Activated CD4-positive, alpha-beta T cell treated with anti-CD3 and anti-CD28 coated beads for 36 hours (primary cell): ENCODE measurements at regions of chr3 and their contacts with region 1.

Region 1: DNA sequence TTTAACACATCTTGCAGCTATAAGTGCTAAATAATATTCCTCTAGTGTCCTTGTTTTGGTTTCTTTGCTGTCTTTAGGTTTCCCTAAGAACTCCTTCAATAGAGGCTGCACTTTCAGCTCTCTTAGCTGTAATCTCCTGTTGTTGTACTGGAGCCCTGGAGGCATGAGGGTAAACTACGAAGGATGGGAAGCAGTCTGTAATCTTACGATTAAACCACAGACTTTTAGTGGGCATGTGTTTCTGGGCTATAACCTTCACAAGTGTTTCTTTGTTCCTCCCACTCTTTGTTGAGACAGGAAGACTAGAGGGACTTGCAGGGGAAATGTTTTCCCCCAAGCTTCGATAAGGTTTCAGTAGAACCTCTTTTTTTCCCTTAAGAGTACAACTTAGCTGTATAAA is 1058.1 kb downstream of the NSUN3 start:
- DNase-seq: no peak
- ATAC-seq: no peak
- H3K4me3 Mint-ChIP-seq: no peak overlapping the region
- H3K27ac Mint-ChIP-seq: no peak overlapping the region
- H3K4me1 Mint-ChIP-seq: no peaks in the 10 kb centered on the region
- H3K27me3 Mint-ChIP-seq: no peaks in the 10 kb centered on the region

Region 2: DNA sequence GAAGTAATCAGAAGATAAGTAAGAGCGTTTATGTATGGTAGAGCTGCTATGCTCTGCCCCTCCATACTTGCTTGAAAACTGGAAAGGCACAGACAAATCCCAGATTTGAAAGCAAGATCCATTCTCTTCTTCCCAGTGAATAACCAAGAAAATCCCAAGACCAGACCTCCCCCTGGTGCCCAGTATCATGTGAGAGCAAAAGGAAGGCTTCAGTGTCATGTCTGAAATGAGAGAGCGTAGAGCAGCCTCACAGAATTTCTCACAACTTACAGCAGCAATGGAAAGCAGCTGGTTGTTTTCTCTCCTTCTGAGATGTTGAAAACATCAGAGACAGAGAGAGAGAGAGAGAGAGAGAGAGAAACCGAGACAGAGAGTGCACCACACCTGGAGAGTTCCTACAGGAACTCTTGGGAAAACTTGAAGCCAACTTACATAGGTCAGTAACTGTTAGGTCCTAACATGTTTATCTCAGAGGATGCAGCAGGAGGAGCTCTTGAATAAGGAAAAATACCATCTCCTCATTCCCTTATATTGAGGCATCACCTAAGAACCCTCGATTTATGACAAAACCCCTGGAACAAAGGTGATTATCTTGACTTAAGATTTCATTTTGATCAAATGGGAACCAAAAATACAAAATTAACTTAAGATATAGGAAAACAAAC is 784.7 kb before region 1 on chr3:
- CTCF ChIA-PET with region 1: no interaction called
- POLR2A ChIA-PET with region 1: no interaction called
- intact Hi-C with region 1: loop called in 1 of 2 experiments (anchors 5 kb)
- DNase-seq: no peak
- ATAC-seq: no peak
- H3K4me3 Mint-ChIP-seq: no peak overlapping the region
- H3K27ac Mint-ChIP-seq: no peak overlapping the region
- H3K4me1 Mint-ChIP-seq: no peaks in the 10 kb centered on the region
- H3K27me3 Mint-ChIP-seq: no peaks in the 10 kb centered on the region